Activated naive CD4-positive, alpha-beta T cell treated with anti-CD3 and anti-CD28 coated beads for 36 hours (primary cell): ENCODE measurements at regions of chr3 and their contacts with region 1.

Region 1: GRCh38 chr3:112531358-112531781 is 30.4 kb downstream of the ATG3 start:
- DNase-seq: no peak
- H3K4me3 Mint-ChIP-seq: no peak overlapping the region
- H3K27ac Mint-ChIP-seq: peak overlapping the region; percentile 62
- H3K4me1 Mint-ChIP-seq: peaks cover 11% of the 10 kb centered on the region
- H3K27me3 Mint-ChIP-seq: no peaks in the 10 kb centered on the region

Region 2: DNA sequence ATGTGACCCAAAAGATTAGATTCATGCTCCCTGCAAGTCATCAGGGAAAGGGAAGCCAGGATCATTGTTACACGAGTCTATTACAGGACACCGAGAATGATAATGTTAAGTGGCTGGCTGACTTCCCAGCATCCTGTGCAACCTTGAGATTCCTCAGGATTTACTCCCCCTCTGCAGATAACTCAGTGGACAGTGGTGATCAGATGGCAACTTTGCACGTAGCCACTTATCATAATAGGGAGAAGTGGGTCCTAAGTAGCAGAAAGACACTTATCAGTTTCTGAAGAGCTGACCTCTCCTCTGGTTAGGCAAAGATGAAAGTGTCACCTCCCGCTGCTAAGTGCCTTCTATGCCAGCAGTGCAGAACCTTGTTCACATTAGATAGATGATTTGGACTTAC is 503.5 kb before region 1 on chr3:
- CTCF ChIA-PET with region 1: no interaction called
- intact Hi-C with region 1: no loop called
- DNase-seq: no peak
- H3K4me3 Mint-ChIP-seq: no peak overlapping the region
- H3K27ac Mint-ChIP-seq: no peak overlapping the region
- H3K4me1 Mint-ChIP-seq: no peaks in the 10 kb centered on the region
- H3K27me3 Mint-ChIP-seq: no peaks in the 10 kb centered on the region

Region 3: GRCh38 chr3:112314649-112315048 is 216.7 kb before region 1 on chr3:
- CTCF ChIA-PET with region 1: no interaction called
- intact Hi-C with region 1: no loop called
- DNase-seq: no peak
- H3K4me3 Mint-ChIP-seq: no peak overlapping the region
- H3K27ac Mint-ChIP-seq: no peak overlapping the region
- H3K4me1 Mint-ChIP-seq: no peaks in the 10 kb centered on the region
- H3K27me3 Mint-ChIP-seq: peaks cover 6% of the 10 kb centered on the region

Region 4: DNA sequence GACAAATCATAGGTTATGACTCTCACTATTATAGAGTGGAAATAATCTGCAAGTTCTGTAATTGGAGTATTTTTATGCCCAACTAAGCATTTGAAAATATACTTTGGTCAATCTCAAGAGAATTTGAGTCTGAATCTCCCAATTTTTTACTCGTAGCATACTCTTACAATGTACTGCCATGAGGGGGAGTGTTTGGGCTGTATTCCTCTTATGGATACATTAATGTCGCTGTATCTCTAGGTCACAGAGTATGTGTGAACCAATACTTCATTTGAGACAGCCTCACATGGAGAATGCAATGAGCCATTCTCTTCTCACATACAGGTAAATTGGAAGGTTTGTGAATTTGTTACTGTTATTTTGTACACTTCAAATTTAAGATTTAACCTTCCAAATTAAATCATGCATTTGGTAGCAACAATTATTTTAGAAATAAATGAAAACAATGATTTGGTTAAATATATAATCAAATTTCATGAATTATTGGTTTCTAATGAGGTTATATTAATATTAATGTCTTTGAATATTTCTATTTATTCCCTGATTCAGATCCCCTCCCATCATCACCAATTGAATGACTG is 203.9 kb before region 1 on chr3:
- CTCF ChIA-PET with region 1: interaction called, 6 read pairs
- intact Hi-C with region 1: loop called (anchors 1 kb)
- DNase-seq: peak; percentile 65
- H3K4me3 Mint-ChIP-seq: no peak overlapping the region
- H3K27ac Mint-ChIP-seq: no peak overlapping the region
- H3K4me1 Mint-ChIP-seq: peaks cover 13% of the 10 kb centered on the region
- H3K27me3 Mint-ChIP-seq: peaks cover 9% of the 10 kb centered on the region

Region 5: DNA sequence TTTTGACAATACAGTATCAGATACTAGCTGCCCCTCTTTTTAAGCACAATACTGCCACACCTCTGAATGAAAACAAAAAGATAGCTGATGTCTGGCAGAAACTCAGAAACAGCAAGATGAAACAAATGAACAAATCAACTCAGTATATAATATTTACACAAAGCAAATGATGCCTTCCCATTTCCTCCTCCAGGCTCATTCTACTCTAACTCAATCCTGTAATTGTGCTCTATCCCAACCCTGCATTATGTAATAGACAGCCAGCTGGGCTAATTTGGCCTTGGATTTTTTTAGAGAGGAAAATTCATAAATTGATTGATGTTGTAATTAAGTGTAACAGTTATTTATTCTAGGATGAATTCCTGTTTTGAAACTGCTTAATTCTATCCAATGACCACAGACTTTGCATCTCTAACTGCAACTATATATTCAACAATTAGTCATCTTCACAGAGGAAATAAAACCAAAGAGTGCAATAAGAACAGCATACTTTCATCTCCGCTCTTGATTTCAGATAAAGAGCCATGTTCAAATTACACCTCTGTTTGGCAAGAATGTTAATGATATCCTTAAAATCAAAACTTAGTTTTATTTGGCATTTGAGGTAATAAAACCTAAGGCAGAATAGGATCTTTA is 24.3 kb after region 1 on chr3:
- CTCF ChIA-PET with region 1: interaction called, 4 read pairs
- intact Hi-C with region 1: loop called (anchors 1 kb)
- DNase-seq: no peak
- H3K4me3 Mint-ChIP-seq: no peak overlapping the region
- H3K27ac Mint-ChIP-seq: no peak overlapping the region
- H3K4me1 Mint-ChIP-seq: peaks cover 51% of the 10 kb centered on the region
- H3K27me3 Mint-ChIP-seq: no peaks in the 10 kb centered on the region